CD4-positive, alpha-beta T cell (primary cell): ENCODE measurements at regions of chr6 and their contacts with region 1.

Region 1: DNA sequence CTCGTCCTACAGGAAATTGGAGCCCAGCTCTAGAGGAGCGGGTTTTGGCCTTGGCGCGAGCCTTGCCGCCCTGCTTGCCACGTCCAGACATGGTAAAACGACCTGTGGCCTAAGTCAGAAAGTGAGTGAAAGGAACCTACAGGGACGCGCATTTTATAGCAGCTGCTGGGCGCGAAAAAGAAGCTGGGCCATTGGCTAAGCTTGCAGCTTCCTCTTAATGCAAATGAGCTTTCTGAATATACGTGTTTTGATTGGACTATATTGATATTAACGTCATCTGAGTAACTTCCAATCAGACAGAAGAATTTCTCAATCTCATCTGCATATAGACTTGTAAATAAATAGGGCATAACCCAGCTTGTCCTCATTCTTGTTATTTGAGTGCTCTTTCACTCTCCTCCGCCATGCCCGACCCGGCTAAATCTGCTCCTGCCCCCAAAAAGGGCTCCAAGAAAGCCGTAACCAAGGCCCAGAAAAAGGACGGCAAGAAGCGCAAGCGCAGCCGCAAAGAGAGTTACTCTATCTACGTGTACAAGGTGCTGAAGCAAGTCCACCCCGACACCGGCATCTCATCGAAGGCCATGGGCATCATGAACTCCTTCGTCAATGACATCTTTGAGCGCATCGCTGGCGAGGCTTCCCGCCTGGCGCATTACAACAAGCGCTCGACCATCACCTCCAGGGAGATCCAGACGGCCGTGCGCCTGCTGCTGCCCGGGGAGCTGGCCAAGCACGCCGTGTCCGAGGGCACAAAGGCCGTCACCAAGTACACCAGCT is 18.9 kb downstream of the OR2B2 start:
- DNase-seq: peak; percentile 76 to 98 (median 85)
- ATAC-seq: peak; percentile 73
- H3K4me3 ChIP-seq: peak overlapping the region; percentile 74
- H3K4me3 Mint-ChIP-seq: no peak overlapping the region
- H3K27ac ChIP-seq: peak overlapping the region; percentile 84 to 86
- H3K27ac Mint-ChIP-seq: no peak overlapping the region
- H3K4me1 ChIP-seq: peaks cover 49% of the 10 kb centered on the region
- H3K4me1 Mint-ChIP-seq: peaks cover 29% of the 10 kb centered on the region
- H3K27me3 ChIP-seq: no peaks in the 10 kb centered on the region
- H3K27me3 Mint-ChIP-seq: no peaks in the 10 kb centered on the region
- CTCF ChIP-seq: no peak

Region 2: DNA sequence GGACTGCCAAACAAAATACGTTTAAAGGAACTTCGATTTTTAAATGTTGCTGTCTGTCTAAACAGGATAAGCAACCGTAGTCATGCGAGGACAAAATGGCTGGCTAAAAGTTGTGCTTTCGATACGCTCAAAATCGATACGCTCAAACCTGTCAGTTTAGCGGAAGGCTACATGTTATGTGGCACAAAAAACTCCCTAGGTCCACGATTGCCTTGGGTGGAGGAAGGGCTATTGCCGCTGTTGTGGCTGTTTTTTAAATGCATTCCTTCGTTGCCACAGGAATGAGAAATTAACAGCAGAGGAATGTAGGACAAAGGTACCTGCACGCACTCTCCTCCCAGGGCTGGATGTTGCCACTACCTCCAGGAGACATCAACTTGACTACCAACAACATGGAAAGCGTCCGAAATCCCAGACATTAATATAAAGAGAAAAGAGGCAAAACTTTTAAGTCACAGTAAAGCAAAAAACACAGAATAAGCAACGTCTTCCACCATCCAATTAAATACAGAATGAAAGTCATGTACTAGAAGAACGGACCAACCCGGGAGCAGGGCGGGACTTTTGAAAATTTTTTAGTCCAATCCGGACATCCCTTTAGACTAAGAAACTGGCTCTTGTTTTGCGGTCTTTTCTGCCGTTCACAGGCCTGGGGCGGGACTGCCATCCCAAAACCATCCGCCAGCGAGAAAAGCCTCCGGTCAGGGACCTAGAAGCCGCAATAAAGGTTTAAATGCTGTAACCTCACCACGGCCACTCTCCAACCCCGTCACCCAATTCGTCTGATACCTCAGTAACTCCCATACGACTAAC is 1838.2 kb before region 1 on chr6:
- CTCF ChIA-PET with region 1: no interaction called
- POLR2A ChIA-PET with region 1: interaction called, 23 read pairs
- intact Hi-C with region 1: no loop called
- DNase-seq: peak; percentile 68 to 97 (median 80)
- ATAC-seq: peak; percentile 71
- H3K4me3 ChIP-seq: peak overlapping the region; percentile 89
- H3K4me3 Mint-ChIP-seq: peak overlapping the region; percentile 97
- H3K27ac ChIP-seq: peak overlapping the region; percentile 81
- H3K27ac Mint-ChIP-seq: peak overlapping the region; percentile 96
- H3K4me1 ChIP-seq: peaks cover 29% of the 10 kb centered on the region
- H3K4me1 Mint-ChIP-seq: peaks cover 28% of the 10 kb centered on the region
- H3K27me3 ChIP-seq: no peaks in the 10 kb centered on the region
- H3K27me3 Mint-ChIP-seq: no peaks in the 10 kb centered on the region
- CTCF ChIP-seq: no peak

Region 3: DNA sequence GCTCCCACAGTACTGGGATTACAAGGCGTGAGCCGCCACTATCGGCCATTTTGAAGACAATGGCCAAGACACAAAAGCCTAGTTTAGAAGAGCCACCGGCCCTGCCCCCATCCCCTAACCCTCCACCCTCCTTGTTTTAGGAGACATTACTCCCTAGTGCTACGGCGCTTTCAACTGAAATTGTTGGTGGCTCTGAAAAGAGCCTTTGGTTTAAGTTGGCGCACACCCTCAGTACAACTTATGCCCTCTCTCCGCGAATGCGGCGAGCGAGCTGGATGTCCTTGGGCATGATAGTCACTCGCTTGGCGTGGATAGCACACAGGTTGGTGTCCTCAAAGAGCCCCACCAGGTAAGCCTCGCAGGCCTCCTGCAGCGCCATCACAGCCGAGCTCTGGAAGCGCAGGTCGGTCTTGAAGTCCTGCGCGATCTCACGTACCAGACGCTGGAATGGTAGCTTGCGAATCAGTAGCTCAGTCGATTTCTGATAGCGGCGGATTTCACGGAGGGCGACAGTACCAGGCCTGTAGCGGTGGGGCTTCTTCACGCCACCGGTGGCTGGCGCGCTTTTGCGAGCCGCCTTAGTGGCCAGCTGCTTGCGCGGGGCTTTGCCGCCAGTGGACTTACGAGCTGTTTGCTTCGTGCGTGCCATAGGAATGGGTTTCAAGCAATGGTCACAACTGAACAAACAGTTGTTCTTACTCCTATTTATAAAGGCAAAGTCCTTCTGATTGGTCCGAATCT is 1643.1 kb before region 1 on chr6:
- CTCF ChIA-PET with region 1: no interaction called
- POLR2A ChIA-PET with region 1: interaction called, 18 read pairs
- intact Hi-C with region 1: no loop called
- DNase-seq: peak; percentile 64 to 93 (median 74)
- ATAC-seq: peak; percentile 78
- H3K4me3 ChIP-seq: peak overlapping the region; percentile 75
- H3K4me3 Mint-ChIP-seq: peak overlapping the region; percentile 97
- H3K27ac ChIP-seq: peak overlapping the region; percentile 72 to 80
- H3K27ac Mint-ChIP-seq: peak overlapping the region; percentile 88
- H3K4me1 ChIP-seq: peaks cover 29% of the 10 kb centered on the region
- H3K4me1 Mint-ChIP-seq: peaks cover 44% of the 10 kb centered on the region
- H3K27me3 ChIP-seq: no peaks in the 10 kb centered on the region
- H3K27me3 Mint-ChIP-seq: no peaks in the 10 kb centered on the region
- CTCF ChIP-seq: no peak

Region 4: DNA sequence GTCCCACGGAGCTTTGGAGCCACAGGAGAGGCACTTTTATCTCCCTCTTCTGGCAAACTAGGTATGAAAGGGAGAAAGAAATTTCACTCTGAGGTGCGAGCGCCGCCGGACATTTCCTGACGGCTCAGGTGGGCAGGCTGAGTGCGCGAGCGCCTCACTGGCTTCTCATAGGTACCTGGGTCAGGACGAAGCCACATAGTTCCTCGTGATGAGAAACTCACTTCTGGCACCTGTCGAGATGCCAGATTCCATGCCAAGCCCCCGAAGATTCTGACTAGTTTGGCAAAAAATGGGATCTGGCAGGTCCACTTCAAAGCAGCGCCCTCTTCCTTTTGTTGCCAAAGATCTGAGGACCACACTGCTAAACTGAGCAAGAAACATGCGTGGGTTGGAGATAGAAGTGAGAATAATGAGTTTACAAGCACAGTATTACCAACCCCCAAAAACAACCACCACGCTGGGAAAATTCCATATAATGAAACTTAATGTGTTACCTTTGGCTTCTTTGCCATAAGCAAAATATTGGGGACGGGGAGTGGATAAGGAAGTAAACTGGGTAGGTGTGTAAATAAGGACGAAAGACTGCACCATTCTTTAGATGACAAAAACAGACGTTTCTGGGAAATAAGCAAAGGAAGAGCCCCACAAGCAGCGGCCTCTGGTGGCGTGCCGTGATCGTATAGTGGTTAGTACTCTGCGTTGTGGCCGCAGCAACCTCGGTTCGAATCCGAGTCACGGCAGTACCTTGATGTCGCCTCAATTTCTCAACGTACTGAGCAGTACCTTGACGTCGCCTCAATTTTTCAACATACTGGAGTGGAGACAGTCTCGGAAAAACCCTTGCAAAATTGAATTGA is 735.6 kb before region 1 on chr6:
- CTCF ChIA-PET with region 1: interaction called, 8 read pairs
- POLR2A ChIA-PET with region 1: interaction called, 10 read pairs
- intact Hi-C with region 1: loop called (anchors 2 to 5 kb)
- DNase-seq: peak; percentile 73 to 93 (median 85)
- ATAC-seq: peak; percentile 88
- H3K4me3 ChIP-seq: peak overlapping the region; percentile 59
- H3K4me3 Mint-ChIP-seq: peak overlapping the region; percentile 90
- H3K27ac ChIP-seq: peak overlapping the region in 1 of 2 donors; percentile 32
- H3K27ac Mint-ChIP-seq: peak overlapping the region; percentile 96
- H3K4me1 ChIP-seq: peaks cover 22% of the 10 kb centered on the region
- H3K4me1 Mint-ChIP-seq: peaks cover 44% of the 10 kb centered on the region
- H3K27me3 ChIP-seq: no peaks in the 10 kb centered on the region
- H3K27me3 Mint-ChIP-seq: peaks cover 7% of the 10 kb centered on the region
- CTCF ChIP-seq: peak; percentile 78

Region 5: DNA sequence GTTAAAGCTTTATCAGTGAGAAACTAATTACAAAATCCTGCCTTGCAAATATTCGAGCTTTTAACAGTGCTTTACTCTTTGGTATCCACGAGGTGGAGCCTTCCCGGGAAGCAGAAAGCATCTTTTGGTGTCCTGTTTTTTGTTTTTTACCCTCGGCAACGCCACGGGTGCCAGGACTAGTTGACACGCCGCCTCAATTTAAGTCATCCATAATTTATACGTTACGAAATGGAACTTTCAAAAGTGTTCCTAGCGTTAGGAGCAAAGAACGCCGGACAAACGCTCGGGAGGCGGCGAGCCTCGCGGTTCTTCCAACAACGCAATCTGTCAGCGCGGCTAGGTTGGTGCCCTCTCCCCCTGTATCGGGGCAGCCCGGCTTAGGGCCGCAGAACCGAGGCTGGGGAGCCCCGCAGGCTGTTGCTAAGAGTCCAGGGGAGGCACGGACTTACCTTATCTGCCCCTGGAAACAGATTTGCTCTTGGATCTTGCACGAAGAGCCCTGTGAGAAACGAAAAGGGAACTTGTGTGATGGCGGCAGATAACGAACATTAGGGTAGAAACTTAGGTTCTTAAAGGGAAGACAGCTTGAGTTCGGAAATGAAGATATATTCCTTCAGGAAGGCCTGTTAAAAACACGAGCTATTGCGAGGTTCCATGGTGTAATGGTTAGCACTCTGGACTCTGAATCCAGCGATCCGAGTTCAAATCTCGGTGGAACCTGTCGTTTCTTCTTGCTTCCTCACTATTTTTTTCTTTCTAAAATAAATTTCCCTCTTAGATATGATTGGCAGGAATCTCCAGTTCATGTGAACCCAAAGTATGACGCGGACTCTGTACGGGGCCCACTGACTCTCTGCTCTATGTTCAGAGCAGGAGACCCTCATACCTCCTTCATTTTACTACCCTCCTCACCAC is 374.1 kb before region 1 on chr6:
- CTCF ChIA-PET with region 1: interaction called, 6 read pairs
- POLR2A ChIA-PET with region 1: interaction called, 8 read pairs
- intact Hi-C with region 1: loop called (anchors 2 kb)
- DNase-seq: peak; percentile 33 to 89 (median 54)
- ATAC-seq: peak; percentile 84
- H3K4me3 ChIP-seq: peak overlapping the region; percentile 92
- H3K4me3 Mint-ChIP-seq: peak overlapping the region; percentile 91
- H3K27ac ChIP-seq: peak overlapping the region; percentile 17 to 76
- H3K27ac Mint-ChIP-seq: peak overlapping the region; percentile 89
- H3K4me1 ChIP-seq: peaks cover 12% of the 10 kb centered on the region
- H3K4me1 Mint-ChIP-seq: peaks cover 31% of the 10 kb centered on the region
- H3K27me3 ChIP-seq: peaks cover 7% of the 10 kb centered on the region in 2 experiments
- H3K27me3 Mint-ChIP-seq: peaks cover 28% of the 10 kb centered on the region
- CTCF ChIP-seq: peak; percentile 78

Region 6: GRCh38 chr6:27816906-27817305 is 76.3 kb before region 1 on chr6:
- CTCF ChIA-PET with region 1: interaction called, 10 read pairs
- POLR2A ChIA-PET with region 1: interaction called, 519 read pairs
- intact Hi-C with region 1: loop called (anchors 1 to 2 kb)
- DNase-seq: no peak
- ATAC-seq: no peak
- H3K4me3 ChIP-seq: no peak overlapping the region
- H3K4me3 Mint-ChIP-seq: peak overlapping the region; percentile 54
- H3K27ac ChIP-seq: no peak overlapping the region
- H3K27ac Mint-ChIP-seq: no peak overlapping the region
- H3K4me1 ChIP-seq: peaks cover 17% of the 10 kb centered on the region
- H3K4me1 Mint-ChIP-seq: peaks cover 18% of the 10 kb centered on the region
- H3K27me3 ChIP-seq: no peaks in the 10 kb centered on the region
- H3K27me3 Mint-ChIP-seq: no peaks in the 10 kb centered on the region
- CTCF ChIP-seq: no peak

Region 7: DNA sequence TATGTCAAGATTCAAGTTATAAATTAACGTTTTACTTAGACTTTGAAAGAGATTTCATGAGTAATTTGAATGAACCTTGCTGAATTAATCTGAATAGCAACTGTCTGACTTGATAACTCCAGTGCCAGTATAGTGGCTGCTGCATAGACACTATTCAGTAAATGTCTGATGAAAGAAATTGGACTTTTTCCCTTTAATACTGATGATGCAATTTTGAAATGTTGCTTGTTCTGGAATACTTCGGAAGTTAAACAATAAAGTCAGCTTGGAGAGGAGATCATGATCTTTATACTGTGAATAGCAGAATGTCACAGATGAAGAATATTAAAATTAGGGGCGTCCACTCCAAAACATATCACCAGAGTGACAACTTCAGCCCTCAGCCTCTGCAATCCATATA is 384.5 kb after region 1 on chr6:
- CTCF ChIA-PET with region 1: no interaction called
- POLR2A ChIA-PET with region 1: no interaction called
- intact Hi-C with region 1: no loop called
- DNase-seq: no peak
- ATAC-seq: no peak
- H3K4me3 ChIP-seq: no peak overlapping the region
- H3K4me3 Mint-ChIP-seq: no peak overlapping the region
- H3K27ac ChIP-seq: no peak overlapping the region
- H3K27ac Mint-ChIP-seq: no peak overlapping the region
- H3K4me1 ChIP-seq: peaks cover 10% of the 10 kb centered on the region
- H3K4me1 Mint-ChIP-seq: peaks cover 14% of the 10 kb centered on the region
- H3K27me3 ChIP-seq: peaks cover 8 to 13% of the 10 kb centered on the region in 2 experiments
- H3K27me3 Mint-ChIP-seq: peaks cover 15% of the 10 kb centered on the region
- CTCF ChIP-seq: no peak

Region 8: GRCh38 chr6:28880894-28881780 is 987.9 kb after region 1 on chr6:
- CTCF ChIA-PET with region 1: no interaction called
- POLR2A ChIA-PET with region 1: interaction called, 13 read pairs
- intact Hi-C with region 1: no loop called
- DNase-seq: peak in 13 of 14 experiments; percentile 27 to 71 (median 43)
- ATAC-seq: no peak
- H3K4me3 ChIP-seq: peak overlapping the region; percentile 39
- H3K4me3 Mint-ChIP-seq: peak overlapping the region; percentile 77
- H3K27ac ChIP-seq: no peak overlapping the region
- H3K27ac Mint-ChIP-seq: peak overlapping the region; percentile 81
- H3K4me1 ChIP-seq: peaks cover 24% of the 10 kb centered on the region
- H3K4me1 Mint-ChIP-seq: peaks cover 39% of the 10 kb centered on the region
- H3K27me3 ChIP-seq: no peaks in the 10 kb centered on the region
- H3K27me3 Mint-ChIP-seq: peaks cover 7% of the 10 kb centered on the region
- CTCF ChIP-seq: no peak